ENCODE measurements at regions of chr1 and their contacts with region 1.

Region 1: DNA sequence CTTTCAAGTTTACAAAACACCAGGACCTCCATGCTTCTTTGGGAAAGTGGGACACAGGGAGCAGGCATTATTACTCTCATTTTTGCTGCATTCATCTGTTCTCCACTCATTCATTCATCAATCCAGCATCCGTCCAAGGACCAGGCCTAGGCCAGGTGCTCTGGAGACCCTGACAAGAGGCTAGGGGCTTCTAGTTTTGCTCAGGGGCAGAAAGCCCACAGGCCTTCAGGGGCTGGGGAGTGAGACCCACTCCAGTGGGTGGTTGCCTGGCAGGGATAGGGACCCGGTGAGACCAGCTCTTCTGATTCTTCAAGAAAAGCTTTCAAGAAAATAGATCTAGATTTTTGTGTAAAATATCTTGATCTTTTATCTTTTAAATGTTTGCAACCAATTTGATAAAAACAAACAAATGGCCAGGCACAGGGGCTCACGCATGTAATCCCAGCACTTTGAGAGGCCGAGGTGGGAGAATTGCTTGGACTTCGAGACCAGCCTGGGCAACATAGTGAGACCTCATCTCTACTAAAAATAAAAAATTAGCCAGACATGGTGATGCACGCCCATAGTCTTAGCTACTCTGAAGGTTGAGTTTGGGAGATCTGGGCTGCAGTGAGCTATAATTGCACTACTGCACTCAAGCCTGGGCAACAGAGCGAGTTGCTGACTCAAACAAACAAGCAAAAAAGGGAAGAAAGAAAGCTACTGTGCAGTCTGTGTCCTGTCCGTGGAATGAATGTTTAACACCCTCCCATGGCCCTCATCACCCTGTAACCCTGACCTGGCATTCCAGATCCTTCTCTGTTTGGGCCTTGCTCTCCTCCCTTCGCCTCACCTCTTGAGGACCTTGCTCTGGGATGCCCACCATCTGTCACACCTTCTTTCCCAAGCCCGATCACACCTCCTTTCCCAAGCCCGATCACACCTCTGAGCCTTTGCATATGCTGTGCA is 17.3 kb upstream of the LRP8 start:
- DNase-seq: no peak
- H3K4me3 ChIP-seq: no peak overlapping the region
- CTCF ChIP-seq: no peak

Region 2: DNA sequence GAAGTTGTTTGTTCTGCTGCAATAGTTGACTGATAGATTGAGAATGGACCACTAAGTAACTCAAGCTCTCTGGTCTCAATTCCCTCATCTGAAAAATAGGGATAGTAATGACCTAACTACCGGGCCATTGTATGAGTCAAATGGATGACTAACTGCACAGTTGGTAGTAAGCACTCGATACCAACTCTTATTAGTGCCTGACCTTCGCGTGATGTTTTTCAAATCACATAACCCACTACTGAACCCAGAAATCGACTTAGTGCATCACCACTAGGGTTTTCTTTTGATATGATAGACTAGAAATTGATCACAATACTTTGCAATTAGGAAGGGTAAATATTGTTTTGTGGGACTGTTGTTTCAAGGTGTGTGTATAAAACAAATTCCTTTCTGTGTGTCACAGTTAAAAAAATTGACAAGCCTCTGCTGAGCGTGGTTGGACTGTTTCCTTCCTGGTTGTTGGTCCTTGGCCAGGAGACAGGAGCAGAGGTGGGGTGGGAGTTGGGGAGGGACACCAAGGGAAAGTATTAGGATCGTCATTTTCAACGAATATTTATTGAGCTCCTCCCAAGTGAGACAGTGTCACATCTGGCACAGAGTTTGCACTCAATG is 36.7 kb after region 1 on chr1:
- in situ Hi-C with region 1: loop called (anchors 5 kb)
- DNase-seq: no peak
- H3K4me3 ChIP-seq: no peak overlapping the region
- CTCF ChIP-seq: no peak